AG04449 (cell line): ENCODE measurements at regions of chr17 and their contacts with region 1.

Region 1: GRCh38 chr17:8300627-8301242 is 5.5 kb upstream of the SLC25A35 start:
- DNase-seq: no peak
- H3K4me3 ChIP-seq: no peak overlapping the region
- CTCF ChIP-seq: peak; percentile 89

Region 2: DNA sequence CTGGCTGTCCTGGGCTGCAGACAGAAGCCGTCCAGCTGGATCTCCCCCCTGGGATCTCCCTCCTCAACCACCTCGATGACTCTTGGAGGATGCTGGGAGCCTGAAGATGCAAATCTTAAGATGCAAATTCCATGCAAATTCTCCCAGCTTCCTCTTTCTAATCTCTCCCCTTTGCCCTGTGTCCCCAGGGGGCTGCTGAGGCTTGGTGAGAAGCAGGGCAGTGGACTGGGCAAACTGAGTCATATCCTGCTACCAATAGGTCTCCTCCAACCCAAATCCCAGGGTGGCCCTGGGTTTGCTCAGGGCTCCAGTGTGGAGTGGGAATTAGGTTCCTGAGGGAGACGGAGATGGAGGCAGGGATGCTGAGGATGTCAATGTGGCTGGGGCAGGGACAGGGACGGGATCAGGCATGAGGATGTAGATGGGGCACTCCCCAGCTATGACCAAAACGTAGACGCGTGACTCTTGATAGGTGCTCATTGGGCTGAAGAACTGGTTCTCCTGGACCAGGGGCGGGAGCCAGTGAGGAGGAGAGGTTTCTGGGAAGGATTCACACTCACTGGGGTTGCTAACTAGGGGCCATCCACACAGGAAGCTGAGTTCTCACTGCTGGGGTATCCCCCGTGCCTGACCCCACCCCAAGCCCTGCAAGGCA is 209.6 kb before region 1 on chr17:
- CTCF ChIA-PET with region 1: interaction called, 10 read pairs
- POLR2A ChIA-PET with region 1: no interaction called
- DNase-seq: no peak
- H3K4me3 ChIP-seq: no peak overlapping the region
- CTCF ChIP-seq: no peak

Region 3: DNA sequence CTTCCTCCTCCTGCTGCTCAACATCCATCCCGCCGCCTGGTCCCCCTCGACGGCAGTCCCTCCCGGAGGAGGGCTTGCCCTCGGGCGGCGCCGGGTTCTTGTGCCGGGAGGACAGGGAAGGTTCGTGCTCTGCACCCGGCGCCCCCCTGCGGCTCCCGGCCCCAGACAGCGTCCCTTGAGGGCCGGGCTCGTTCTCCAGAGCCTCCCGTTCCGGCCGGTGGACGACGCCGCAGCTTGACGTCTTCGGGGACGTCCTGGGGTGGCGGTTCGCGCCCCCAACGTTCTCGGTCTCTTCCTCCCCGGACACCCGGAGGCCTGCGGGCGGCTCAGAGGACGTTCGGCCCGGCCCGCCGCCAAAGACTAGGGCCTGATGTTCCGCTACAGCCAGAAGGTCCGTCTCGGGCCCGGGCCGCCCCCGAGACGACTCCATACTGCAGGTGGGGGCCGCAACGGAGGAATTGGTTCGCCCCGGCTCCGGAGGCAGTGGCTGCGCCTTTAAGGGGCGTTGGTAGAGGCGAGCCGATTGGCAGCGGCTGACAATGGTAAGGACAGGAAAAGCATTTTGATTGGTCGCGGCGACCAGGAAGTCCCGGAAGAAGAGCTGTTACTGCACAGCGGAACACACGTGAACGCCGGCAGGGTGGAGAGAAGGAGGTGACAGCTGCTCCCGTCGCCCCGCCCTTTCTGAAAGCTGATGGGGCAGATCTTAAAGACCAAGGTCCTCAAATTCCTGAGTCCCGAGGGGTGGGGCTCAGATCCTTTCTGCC is 110.8 kb before region 1 on chr17 and contains the start of gene BORCS6:
- CTCF ChIA-PET with region 1: interaction called, 16 read pairs
- POLR2A ChIA-PET with region 1: no interaction called
- DNase-seq: peak; percentile 93
- H3K4me3 ChIP-seq: peak within 1 kb of the TSS; percentile 79
- CTCF ChIP-seq: no peak

Region 4: GRCh38 chr17:8314797-8315763 is 14.3 kb after region 1 on chr17:
- CTCF ChIA-PET with region 1: interaction called, 15 read pairs
- POLR2A ChIA-PET with region 1: no interaction called
- DNase-seq: no peak
- H3K4me3 ChIP-seq: no peak overlapping the region
- CTCF ChIP-seq: no peak

Region 5: GRCh38 chr17:8337802-8338752 is 37.3 kb after region 1 on chr17:
- CTCF ChIA-PET with region 1: interaction called, 10 read pairs
- POLR2A ChIA-PET with region 1: no interaction called
- DNase-seq: no peak
- H3K4me3 ChIP-seq: peak overlapping the region; percentile 12; the same call in 1 of the 2 replicates
- CTCF ChIP-seq: no peak

Region 6: DNA sequence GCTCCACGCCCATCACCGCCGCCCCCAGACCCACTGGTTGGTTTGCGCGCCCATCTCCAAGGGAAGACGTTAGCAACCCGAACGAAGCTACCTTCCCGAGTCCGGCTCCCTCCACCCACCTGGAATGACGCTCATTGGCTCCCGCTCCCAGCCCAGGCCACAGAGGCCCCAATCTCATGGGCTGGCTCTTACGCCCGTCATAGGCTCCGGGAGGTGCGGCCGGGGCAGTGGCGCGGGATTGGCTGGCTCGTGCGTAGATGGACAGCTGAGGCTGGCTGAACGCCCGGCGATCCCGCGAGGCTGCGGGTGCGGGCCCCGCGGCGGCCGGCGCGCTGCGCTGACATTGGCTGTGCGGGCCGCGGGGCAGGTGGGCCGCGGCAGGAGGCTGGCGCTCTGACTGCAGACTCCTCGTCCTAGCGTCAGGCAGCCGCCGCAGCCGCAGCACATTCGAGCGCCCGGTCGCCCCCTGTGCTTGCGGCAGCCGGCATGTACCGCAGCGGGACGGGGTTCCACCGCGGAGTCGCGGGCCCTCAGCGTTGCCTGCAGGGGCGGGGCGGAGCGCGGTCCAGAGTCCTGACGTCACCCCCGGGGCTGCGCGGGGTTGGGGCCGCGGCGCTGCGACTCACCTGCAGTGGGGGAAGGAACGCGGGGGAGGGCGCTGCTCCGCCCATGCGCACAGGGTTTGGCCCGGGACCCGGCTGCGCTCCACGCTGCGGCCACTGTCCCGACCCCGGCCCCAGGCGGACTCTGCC is 330.2 kb after region 1 on chr17:
- CTCF ChIA-PET with region 1: no interaction called
- POLR2A ChIA-PET with region 1: no interaction called
- DNase-seq: peak; percentile 98
- H3K4me3 ChIP-seq: peak overlapping the region; percentile 91
- CTCF ChIP-seq: peak; percentile 8